AG04450 (cell line): ENCODE measurements at regions of chr20 and their contacts with region 1.

Region 1: DNA sequence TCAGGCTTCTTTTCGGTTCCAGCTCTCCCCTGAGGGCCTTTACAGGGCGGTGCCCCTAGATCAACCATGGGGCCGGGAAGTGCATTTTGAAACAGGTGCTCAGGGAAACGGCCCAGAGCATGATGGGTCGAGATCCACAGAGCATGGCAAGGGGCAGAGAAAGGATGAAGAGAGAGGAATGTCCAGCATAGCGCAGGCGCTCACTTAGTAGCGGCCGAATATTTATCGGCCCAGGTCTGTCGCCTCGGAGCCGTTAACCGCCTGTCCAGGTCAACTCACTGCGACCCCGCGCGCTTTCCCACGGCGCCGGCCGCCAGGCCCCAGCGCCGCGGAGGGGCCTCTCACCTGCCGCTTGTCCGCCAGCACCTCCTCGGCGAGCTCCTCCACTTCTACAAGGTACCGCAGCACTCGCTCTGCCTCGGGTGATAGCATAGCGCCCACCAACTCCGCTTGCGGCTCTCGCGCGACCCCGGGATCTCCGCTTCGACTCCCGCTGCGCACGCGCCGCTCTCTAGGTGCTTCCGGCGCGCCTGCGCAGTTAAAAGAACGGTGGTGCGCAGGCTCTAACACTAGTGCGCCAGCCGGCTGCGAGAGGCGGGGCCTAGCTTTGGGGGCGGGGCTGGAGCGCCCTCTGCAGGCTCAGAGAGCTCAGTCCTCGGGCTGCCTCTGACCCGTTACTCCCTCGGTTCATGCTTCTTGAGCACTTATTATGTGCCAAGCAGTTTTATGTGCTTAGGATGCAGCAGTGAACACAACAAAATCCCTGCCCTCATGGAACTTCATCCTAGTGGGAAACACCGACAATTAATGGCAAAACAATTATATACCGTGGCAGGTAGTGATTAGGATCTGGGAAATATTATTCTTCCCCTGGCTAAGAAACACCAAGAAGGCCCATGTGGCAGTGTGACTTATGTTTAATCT is at the start of gene PDRG1:
- DNase-seq: peak; percentile 93
- H3K4me3 ChIP-seq: peak within 1 kb of the TSS; percentile 93
- H3K27ac ChIP-seq: peak within 1 kb of the TSS; percentile 21
- H3K27me3 ChIP-seq: peaks cover 12% of the 10 kb centered on the region
- CTCF ChIP-seq: peak; percentile 90
- polyA plus RNA-seq, gene PDRG1: 13.1 and 13.2 TPM in 2 replicates

Region 2: GRCh38 chr20:31822421-31823330 is 129.1 kb before region 1 on chr20:
- CTCF ChIA-PET with region 1: interaction called, 27 read pairs
- POLR2A ChIA-PET with region 1: interaction called, 4 read pairs
- DNase-seq: no peak
- H3K4me3 ChIP-seq: peak overlapping the region; percentile 13; the same call in 1 of the 2 replicates
- H3K27ac ChIP-seq: no peak overlapping the region
- H3K27me3 ChIP-seq: peaks cover 2% of the 10 kb centered on the region
- CTCF ChIP-seq: peak; percentile 94

Region 3: DNA sequence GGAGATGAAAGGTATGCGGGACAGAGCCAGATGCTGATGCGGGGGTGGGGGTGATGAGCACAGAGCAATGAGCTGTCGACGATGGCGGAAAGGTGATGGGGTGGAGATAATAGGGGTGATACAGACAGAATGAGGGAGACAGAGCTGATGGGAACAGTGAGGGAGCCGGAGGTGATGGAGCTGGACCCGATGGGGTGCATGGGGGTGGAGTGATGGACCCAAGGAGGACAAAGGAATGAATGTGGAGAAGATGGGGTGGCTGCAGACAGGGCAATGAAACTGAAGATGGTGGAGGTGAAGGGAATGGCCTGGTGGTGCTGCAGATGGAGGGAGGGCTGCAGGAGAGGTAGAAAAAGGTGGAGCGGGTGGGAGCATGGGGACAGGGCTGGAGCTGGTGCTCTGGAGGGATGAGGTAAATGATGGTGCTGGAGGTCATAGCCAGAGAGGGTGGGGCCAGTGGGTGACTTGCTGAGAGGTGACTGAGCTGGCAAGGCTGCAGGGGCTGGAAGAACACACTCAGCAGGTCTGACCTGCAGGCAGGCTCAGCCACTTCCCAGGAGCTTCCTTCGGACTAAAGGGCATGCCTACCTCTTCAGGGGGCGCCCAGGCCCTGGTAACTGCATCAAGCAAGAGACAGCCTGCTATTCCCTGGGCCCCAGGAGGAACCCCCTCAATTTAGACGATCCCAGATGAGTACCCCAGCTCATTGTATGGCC is 100.4 kb before region 1 on chr20:
- CTCF ChIA-PET with region 1: interaction called, 79 read pairs
- POLR2A ChIA-PET with region 1: no interaction called
- DNase-seq: no peak
- H3K4me3 ChIP-seq: no peak overlapping the region
- H3K27ac ChIP-seq: no peak overlapping the region
- H3K27me3 ChIP-seq: peaks cover 57% of the 10 kb centered on the region
- CTCF ChIP-seq: no peak

Region 4: DNA sequence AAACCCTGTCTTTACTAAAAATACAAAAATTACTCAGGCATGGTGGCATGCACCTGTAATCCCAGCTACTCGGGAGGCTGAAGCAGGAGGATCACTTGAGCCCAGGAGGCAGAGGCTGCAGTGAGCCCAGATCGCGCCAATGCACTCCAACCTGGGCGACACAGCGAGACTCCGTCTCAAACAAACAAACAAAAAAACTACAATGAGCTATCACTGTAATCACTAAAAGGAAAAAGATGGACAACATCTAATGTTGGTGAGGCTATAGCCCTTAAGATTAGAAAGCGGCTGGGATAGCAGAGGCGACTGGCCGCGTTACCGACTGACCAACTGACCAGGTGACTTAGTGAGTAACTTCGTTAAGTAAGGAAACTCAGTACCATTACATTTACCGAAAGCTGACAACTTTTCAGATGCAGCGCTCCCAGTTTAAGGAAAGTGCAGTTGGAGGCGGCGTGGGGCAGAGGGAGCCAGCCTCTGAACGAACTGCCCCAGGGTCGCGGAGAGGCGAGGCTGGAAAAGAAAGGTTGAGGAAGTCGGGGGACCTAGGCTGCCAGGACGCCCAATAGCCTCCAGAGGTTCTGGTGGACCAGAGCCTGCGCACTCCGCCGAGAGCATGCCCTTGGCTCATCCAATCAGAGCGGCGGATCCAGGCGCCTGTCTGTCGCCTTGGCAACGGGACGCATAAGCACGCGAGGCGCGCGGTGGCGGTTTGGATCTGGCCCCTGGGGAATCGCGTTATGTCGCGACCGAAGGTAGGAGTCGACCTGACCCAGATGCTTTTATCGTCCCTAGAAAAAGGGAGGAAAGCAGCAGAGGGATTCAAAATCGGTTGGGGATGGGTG is 72.4 kb before region 1 on chr20:
- CTCF ChIA-PET with region 1: interaction called, 18 read pairs
- POLR2A ChIA-PET with region 1: interaction called, 3 read pairs
- DNase-seq: peak; percentile 84
- H3K4me3 ChIP-seq: peak overlapping the region; percentile 79
- H3K27ac ChIP-seq: no peak overlapping the region
- H3K27me3 ChIP-seq: no peaks in the 10 kb centered on the region
- CTCF ChIP-seq: no peak; the same call in 1 of the 2 replicates

Region 5: GRCh38 chr20:31962761-31963160 is 11.0 kb after region 1 on chr20:
- CTCF ChIA-PET with region 1: interaction called, 17 read pairs
- POLR2A ChIA-PET with region 1: no interaction called
- DNase-seq: no peak
- H3K4me3 ChIP-seq: no peak overlapping the region
- H3K27ac ChIP-seq: no peak overlapping the region
- H3K27me3 ChIP-seq: peaks cover 28% of the 10 kb centered on the region
- CTCF ChIP-seq: no peak

Region 6: GRCh38 chr20:32031007-32031958 is 79.5 kb after region 1 on chr20:
- CTCF ChIA-PET with region 1: interaction called, 12 read pairs
- POLR2A ChIA-PET with region 1: no interaction called
- DNase-seq: peak; percentile 39
- H3K4me3 ChIP-seq: peak overlapping the region; percentile 25; the same call in 1 of the 2 replicates
- H3K27ac ChIP-seq: no peak overlapping the region
- H3K27me3 ChIP-seq: peaks cover 77% of the 10 kb centered on the region
- CTCF ChIP-seq: peak; percentile 92